Naive thymus-derived CD4-positive, alpha-beta T cell (primary cell): ENCODE measurements at regions of chr19 and their contacts with region 1.

Region 1: GRCh38 chr19:10142701-10143375 is 23.1 kb upstream of the EIF3G start:
- DNase-seq: peak in 7 of 9 donors; percentile 47 to 77 (median 67)
- ATAC-seq: peak; percentile 95
- H3K4me3 ChIP-seq: peak overlapping the region; percentile 16
- H3K4me3 Mint-ChIP-seq: peak overlapping the region; percentile 78 to 94 (median 86)
- H3K27ac ChIP-seq: peak overlapping the region; percentile 82
- H3K27ac Mint-ChIP-seq: peak overlapping the region; percentile 96 to 100 (median 99)
- H3K4me1 ChIP-seq: peaks cover 41 to 49% of the 10 kb centered on the region in 2 donors
- H3K4me1 Mint-ChIP-seq: peaks cover 5 to 58% (median 42%) of the 10 kb centered on the region in 7 donors
- H3K27me3 ChIP-seq: no peaks in the 10 kb centered on the region
- H3K27me3 Mint-ChIP-seq: no peaks in the 10 kb centered on the region

Region 2: GRCh38 chr19:10085641-10086590 is 56.9 kb before region 1 on chr19 and contains the start of gene SHFL:
- CTCF ChIA-PET with region 1: no interaction called
- POLR2A ChIA-PET with region 1: no interaction called
- intact Hi-C with region 1: loop called in 1 of 2 experiments (anchors 1 kb)
- DNase-seq: peak; percentile 71 to 90 (median 83)
- ATAC-seq: peak; percentile 98
- H3K4me3 ChIP-seq: peak within 1 kb of the TSS; percentile 94
- H3K4me3 Mint-ChIP-seq: peak within 1 kb of the TSS; percentile 75 to 92 (median 90)
- H3K27ac ChIP-seq: peak within 1 kb of the TSS; percentile 90
- H3K27ac Mint-ChIP-seq: peak within 1 kb of the TSS; percentile 81 to 92 (median 88)
- H3K4me1 ChIP-seq: peaks cover 4 to 9% of the 10 kb centered on the region in 2 donors
- H3K4me1 Mint-ChIP-seq: peaks cover 8 to 21% (median 8%) of the 10 kb centered on the region in 7 donors
- H3K27me3 ChIP-seq: no peaks in the 10 kb centered on the region
- H3K27me3 Mint-ChIP-seq: no peaks in the 10 kb centered on the region
- total RNA-seq, gene SHFL: 67.8 to 112 (median 102) TPM

Region 3: DNA sequence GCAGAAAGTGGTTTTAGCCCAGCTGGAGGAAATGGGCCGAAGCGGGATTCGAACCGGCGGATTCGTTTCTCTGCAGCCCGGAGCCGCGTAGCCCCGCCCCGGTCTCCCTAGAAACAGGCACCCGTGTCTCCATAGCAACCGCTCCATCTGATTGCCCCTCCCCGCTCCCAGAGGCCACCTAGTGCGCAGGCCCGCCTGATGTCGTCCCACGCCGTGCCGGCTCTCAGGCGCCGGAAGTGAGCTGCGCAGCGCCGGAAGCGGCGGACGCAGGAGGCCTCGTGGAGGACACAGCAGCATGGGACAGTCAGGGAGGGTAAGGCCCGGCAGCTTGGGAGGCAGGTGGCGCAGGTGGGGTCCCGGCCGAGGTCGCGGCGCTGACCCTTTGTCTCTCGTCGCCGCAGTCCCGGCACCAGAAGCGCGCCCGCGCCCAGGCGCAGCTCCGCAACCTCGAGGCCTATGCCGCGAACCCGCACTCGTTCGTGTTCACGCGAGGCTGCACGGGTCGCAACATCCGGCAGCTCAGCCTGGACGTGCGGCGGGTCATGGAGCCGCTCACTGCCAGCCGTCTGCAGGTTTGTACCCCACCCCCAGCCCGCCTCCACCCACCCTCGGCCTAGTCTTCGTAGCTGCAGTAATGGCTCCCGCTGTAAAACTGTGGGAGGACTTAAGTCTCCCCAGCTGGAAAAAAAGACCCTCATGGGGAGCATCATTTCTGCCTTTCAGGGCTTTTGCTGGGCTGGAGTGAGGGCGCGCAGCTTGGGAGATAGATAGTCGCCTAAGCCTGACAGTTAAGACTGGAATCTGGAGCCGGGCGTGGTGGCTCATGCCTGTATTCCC is 36.5 kb before region 1 on chr19 and contains the start of gene PPAN:
- CTCF ChIA-PET with region 1: interaction called, 15 read pairs
- POLR2A ChIA-PET with region 1: interaction called, 14 read pairs
- intact Hi-C with region 1: loop called in 1 of 2 experiments (anchors 1 kb)
- DNase-seq: peak; percentile 88 to 98 (median 97)
- ATAC-seq: peak; percentile 86
- H3K4me3 ChIP-seq: peak within 1 kb of the TSS; percentile 60
- H3K4me3 Mint-ChIP-seq: peak within 1 kb of the TSS; percentile 75 to 91 (median 88)
- H3K27ac ChIP-seq: peak within 1 kb of the TSS; percentile 86
- H3K27ac Mint-ChIP-seq: peak within 1 kb of the TSS; percentile 92 to 98 (median 97)
- H3K4me1 ChIP-seq: peaks cover 53 to 65% of the 10 kb centered on the region in 2 donors
- H3K4me1 Mint-ChIP-seq: peaks cover 32 to 61% (median 56%) of the 10 kb centered on the region in 7 donors
- H3K27me3 ChIP-seq: no peaks in the 10 kb centered on the region
- H3K27me3 Mint-ChIP-seq: no peaks in the 10 kb centered on the region
- total RNA-seq, gene PPAN: 87.6 to 122 (median 109) TPM

Region 4: DNA sequence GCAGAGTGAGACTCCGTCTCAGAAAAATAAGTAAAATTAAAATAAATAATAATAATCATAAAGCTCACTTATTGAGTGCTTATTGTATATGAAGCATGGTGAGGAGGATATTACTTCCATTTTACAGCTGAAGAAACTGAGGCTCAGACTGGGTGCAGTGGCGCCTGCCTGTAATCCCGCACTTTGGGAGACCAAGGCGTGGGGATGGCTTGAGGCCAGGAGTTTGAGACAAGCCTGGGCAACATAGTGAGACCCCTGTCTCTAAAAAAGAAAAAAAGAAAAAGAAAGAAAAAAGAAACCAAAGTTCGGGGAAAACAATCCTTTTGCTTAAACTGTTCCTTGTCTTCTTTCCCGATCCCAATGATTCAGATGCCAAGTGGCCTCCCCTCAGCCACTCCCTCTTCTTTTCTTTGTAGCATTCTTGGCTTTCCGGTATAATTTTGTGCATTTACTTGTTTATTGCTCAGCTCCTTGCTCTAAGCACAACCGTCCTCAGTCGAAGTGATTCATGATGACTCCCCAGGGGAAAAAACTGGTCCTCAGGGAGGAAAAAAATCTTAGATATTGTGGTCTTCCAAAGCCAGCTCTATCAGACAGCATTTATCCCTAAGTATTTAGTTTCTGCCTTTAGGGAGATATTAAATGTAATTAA is 22.2 kb before region 1 on chr19:
- CTCF ChIA-PET with region 1: interaction called, 11 read pairs
- POLR2A ChIA-PET with region 1: interaction called, 31 read pairs
- intact Hi-C with region 1: loop called in 1 of 2 experiments (anchors 1 kb)
- DNase-seq: no peak
- ATAC-seq: no peak
- H3K4me3 ChIP-seq: no peak overlapping the region
- H3K4me3 Mint-ChIP-seq: peak overlapping the region in 4 of 10 donors; percentile 15 to 42 (median 34)
- H3K27ac ChIP-seq: no peak overlapping the region
- H3K27ac Mint-ChIP-seq: no peak overlapping the region
- H3K4me1 ChIP-seq: peaks cover 10 to 25% of the 10 kb centered on the region in 2 donors
- H3K4me1 Mint-ChIP-seq: peaks cover 5 to 30% (median 15%) of the 10 kb centered on the region in 7 donors
- H3K27me3 ChIP-seq: no peaks in the 10 kb centered on the region
- H3K27me3 Mint-ChIP-seq: no peaks in the 10 kb centered on the region

Region 5: DNA sequence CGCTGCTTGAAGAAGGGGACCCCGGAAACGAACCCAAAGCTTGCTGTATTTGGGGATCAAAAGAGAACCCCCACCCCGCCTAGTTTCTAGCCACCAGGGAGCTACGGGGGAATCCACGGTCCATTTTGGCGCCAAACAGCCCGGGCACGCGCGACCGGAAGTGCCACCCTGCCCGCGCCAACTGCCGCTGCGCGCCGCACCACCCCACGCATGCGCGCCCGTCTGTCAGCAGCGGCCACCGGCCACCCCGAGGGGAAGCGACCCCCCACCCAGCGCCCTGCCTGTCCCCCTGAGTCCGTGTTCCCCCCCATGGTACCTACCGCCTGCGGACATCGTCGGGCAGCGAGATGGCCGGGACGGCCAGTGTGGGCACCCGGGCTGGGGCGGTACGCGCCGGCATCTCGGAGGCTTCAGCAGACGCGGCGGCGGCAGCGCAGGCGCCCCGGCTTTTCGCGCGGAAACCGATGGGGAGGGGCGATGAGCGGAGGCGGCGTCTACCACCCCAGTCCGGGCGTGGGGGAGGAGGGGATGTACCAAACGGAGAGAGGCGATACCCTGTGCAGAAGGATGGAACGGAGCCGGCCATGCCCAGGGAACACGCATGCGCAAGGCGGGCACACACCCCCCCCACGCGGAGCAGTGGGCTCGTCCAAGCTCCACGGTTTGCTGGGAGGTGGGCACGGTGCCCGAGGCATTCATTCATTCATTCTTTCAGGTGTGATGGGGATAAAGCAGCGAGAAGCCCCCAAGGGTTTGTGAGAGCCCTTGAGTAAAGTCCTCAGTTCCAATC is 51.9 kb after region 1 on chr19 and contains the start of gene DNMT1:
- CTCF ChIA-PET with region 1: no interaction called
- POLR2A ChIA-PET with region 1: interaction called, 6 read pairs
- intact Hi-C with region 1: loop called in 1 of 2 experiments (anchors 1 kb)
- DNase-seq: peak; percentile 87 to 98 (median 93)
- ATAC-seq: peak; percentile 99
- H3K4me3 ChIP-seq: peak within 1 kb of the TSS; percentile 88
- H3K4me3 Mint-ChIP-seq: peak within 1 kb of the TSS; percentile 87 to 98 (median 95)
- H3K27ac ChIP-seq: peak within 1 kb of the TSS; percentile 81
- H3K27ac Mint-ChIP-seq: peak within 1 kb of the TSS; percentile 82 to 96 (median 92)
- H3K4me1 ChIP-seq: peaks cover 7 to 20% of the 10 kb centered on the region in 2 donors
- H3K4me1 Mint-ChIP-seq: peaks cover 14 to 48% (median 40%) of the 10 kb centered on the region in 7 donors
- H3K27me3 ChIP-seq: no peaks in the 10 kb centered on the region
- H3K27me3 Mint-ChIP-seq: no peaks in the 10 kb centered on the region
- total RNA-seq, gene DNMT1: 175 to 334 (median 194) TPM